ACHN (cell line): ENCODE measurements at regions of chr22 and their contacts with region 1.

Region 1: GRCh38 chr22:39554151-39554550 is 16.4 kb upstream of the CACNA1I start:
- DNase-seq: no peak

Region 2: GRCh38 chr22:39592134-39593065 is 38.2 kb after region 1 on chr22:
- in situ Hi-C with region 1: loop called (anchors 5 kb)
- DNase-seq: peak; percentile 94